Esophagus muscularis mucosa (tissue), 4 donors: ENCODE measurements at regions of chr11 and their contacts with region 1.

Region 1: GRCh38 chr11:118607401-118608359 is at the start of gene PHLDB1:
- DNase-seq: no peak
- H3K4me3 ChIP-seq: peak within 1 kb of the TSS; percentile 76 to 86 (median 83)
- H3K27ac ChIP-seq: peak within 1 kb of the TSS; percentile 92 to 96 (median 94)
- H3K4me1 ChIP-seq: peaks cover 43 to 88% (median 77%) of the 10 kb centered on the region in 4 donors
- H3K27me3 ChIP-seq: no peaks in the 10 kb centered on the region
- CTCF ChIP-seq: peak; percentile 40 to 58 (median 58)
- EP300 ChIP-seq: no peak
- POLR2A ChIP-seq: no peak
- total RNA-seq, gene PHLDB1: 62.6 to 92.2 (median 78.9) TPM

Region 2: DNA sequence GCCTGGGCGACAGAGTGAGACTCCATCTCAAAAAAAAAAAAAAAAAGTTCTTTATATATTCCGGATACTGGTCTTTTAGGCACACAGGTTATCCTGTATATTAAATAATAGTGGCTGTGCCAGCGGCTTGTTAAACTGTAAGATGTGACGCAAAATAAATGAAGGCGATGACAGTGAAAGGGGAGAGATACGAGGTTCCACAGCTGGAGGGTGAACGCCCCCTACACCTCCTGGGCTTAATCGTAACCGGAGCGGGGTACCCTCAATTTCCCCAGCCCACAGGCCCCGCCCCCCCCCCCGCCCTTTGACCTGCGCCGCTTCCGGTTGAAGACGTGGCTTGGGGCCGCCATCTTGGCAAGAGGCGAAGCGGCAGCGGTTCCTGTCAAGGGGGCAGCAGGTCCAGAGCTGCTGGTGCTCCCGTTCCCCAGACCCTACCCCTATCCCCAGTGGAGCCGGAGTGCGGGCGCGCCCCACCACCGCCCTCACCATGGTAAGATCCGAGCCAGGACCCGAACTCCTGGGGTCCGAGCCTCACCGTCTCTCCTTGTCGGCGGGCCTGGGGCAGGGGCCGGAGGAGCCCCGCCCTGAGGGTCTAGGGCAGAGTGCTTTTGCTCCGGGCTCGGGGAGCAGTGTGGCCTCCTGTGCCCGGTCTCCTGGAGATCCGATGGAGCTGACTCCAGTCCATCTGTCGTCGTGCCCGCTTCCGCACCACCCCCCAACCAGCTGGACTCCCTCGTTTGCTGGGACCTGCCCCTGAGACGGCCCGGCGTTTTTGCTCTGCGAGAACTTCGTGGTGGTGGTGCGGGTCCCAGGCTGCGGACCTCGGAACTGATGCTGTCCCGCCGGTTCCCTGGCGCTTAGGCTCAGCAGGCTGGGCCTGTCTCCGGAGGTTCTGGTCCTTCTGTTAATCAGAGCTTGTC is 35.4 kb before region 1 on chr11 and contains the start of gene ARCN1:
- intact Hi-C with region 1: loop called (anchors 5 kb)
- DNase-seq: peak; percentile 97
- H3K4me3 ChIP-seq: peak within 1 kb of the TSS; percentile 70 to 86 (median 83)
- H3K27ac ChIP-seq: peak within 1 kb of the TSS; percentile 90 to 97 (median 94)
- H3K4me1 ChIP-seq: peaks cover 44 to 49% (median 47%) of the 10 kb centered on the region in 4 donors
- H3K27me3 ChIP-seq: no peaks in the 10 kb centered on the region
- CTCF ChIP-seq: no peak
- EP300 ChIP-seq: no peak
- POLR2A ChIP-seq: peak; percentile 7
- total RNA-seq, gene ARCN1: 83.9 to 115 (median 102) TPM

Region 3: DNA sequence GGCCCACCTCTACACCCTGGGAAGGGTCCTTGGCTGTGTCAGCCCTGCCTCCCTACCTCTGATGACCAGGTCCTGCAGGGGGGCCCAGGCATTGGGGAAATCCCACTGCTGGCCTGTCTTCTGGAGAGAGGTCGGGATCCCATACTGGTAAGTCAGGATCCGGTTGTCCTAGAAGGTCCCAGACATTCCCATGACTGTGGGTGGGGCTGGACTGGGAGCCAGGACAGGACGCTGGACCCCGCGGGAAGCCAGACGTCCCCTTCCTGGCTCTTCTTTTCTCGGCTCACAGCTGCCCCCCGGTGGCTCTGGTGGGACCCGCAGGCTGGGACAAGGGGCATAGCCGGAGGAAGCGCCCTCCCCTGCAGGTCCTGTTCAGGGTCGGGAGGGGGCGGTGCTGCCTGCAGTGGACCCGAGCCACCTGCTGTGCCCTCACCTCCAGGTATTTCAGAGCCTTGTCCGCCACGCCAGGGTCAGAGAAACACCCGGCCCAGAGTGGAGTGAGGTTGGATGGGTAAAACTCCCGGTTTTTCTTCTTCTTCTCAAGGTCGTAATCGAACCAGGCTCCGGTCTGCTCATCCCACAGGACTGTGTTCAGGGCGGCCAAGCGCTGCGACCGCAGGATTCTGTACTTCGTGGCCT is 51.8 kb after region 1 on chr11:
- intact Hi-C with region 1: loop called (anchors 5 kb)
- DNase-seq: peak; percentile 97
- H3K4me3 ChIP-seq: peak overlapping the region in 2 of 4 donors; percentile 12 to 13
- H3K27ac ChIP-seq: peak overlapping the region; percentile 29 to 58 (median 42)
- H3K4me1 ChIP-seq: peaks cover 10 to 23% (median 18%) of the 10 kb centered on the region in 4 donors
- H3K27me3 ChIP-seq: peaks cover 0 to 12% (median 0%) of the 10 kb centered on the region in 4 donors
- CTCF ChIP-seq: peak in 2 of 3 experiments; percentile 98 to 99
- EP300 ChIP-seq: no peak
- POLR2A ChIP-seq: no peak

Region 4: GRCh38 chr11:118679483-118679882 is 71.8 kb after region 1 on chr11 and contains the start of gene TREH:
- intact Hi-C with region 1: no loop called
- DNase-seq: no peak
- H3K4me3 ChIP-seq: no peak within 1 kb of the TSS
- H3K27ac ChIP-seq: no peak within 1 kb of the TSS
- H3K4me1 ChIP-seq: peaks cover 0 to 5% (median 2%) of the 10 kb centered on the region in 4 donors
- H3K27me3 ChIP-seq: no peaks in the 10 kb centered on the region
- CTCF ChIP-seq: no peak
- EP300 ChIP-seq: no peak
- POLR2A ChIP-seq: no peak
- total RNA-seq, gene TREH: not detected